ENCODE measurements at regions of chr5 and their contacts with region 1.

Region 1: GRCh38 chr5:88690409-88691229 is 192.4 kb downstream of the MEF2C start:
- DNase-seq: peak; percentile 75
- ATAC-seq: peak; percentile 79
- H3K4me3 Mint-ChIP-seq: peak overlapping the region; percentile 53
- H3K27ac Mint-ChIP-seq: peak overlapping the region; percentile 80
- H3K4me1 Mint-ChIP-seq: peaks cover 10% of the 10 kb centered on the region
- H3K27me3 Mint-ChIP-seq: peaks cover 88% of the 10 kb centered on the region

Region 2: GRCh38 chr5:88391116-88391515 is 299.5 kb before region 1 on chr5:
- CTCF ChIA-PET with region 1: no interaction called
- POLR2A ChIA-PET with region 1: no interaction called
- DNase-seq: no peak
- ATAC-seq: no peak
- H3K4me3 Mint-ChIP-seq: no peak overlapping the region
- H3K27ac Mint-ChIP-seq: no peak overlapping the region
- H3K4me1 Mint-ChIP-seq: no peaks in the 10 kb centered on the region
- H3K27me3 Mint-ChIP-seq: no peaks in the 10 kb centered on the region

Region 3: DNA sequence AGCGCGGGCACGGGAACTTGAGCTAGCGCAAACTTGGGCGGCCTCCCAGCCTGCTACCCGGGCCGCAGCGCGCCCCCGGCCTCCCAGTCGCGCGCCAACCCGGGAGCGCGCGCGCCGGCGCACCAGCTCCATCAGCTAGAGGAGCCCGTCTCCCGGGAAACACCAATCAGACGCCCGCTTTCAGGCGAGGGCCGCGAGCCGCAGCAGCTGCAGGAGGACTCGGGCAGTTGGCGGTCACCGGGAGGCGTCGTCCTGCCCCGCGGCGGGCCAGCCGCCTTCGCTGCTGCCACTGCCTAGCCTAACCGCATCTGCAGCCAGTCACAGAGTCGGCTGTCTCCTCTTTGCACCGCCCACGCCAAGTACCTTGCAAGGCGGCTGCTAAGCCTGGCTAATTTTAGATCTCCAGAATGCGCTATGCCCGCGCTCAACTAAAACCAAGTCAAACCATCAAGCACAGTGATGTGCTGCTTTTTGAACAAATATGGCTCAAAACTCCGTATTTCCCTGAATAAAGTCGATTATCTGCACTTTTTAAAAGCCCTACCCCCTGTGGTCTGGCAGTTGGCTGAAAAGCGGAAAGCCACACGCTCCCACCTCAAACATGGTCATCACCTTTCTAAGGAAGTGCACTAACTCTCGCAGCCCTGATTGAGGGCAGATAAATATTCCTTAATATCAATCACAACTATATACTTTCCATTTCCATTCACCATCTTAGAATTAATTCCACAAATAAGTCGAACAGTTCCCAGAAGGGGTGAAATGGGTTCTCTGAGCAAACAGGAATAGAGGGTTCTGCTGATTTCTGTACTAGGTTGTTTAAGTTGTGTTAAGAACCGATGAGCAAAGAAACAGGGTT is 29.4 kb before region 1 on chr5:
- CTCF ChIA-PET with region 1: interaction called, 27 read pairs
- POLR2A ChIA-PET with region 1: no interaction called
- DNase-seq: peak; percentile 45
- ATAC-seq: peak; percentile 76
- H3K4me3 Mint-ChIP-seq: peak overlapping the region; percentile 70
- H3K27ac Mint-ChIP-seq: no peak overlapping the region
- H3K4me1 Mint-ChIP-seq: peaks cover 24% of the 10 kb centered on the region
- H3K27me3 Mint-ChIP-seq: peaks cover 64% of the 10 kb centered on the region

Region 4: DNA sequence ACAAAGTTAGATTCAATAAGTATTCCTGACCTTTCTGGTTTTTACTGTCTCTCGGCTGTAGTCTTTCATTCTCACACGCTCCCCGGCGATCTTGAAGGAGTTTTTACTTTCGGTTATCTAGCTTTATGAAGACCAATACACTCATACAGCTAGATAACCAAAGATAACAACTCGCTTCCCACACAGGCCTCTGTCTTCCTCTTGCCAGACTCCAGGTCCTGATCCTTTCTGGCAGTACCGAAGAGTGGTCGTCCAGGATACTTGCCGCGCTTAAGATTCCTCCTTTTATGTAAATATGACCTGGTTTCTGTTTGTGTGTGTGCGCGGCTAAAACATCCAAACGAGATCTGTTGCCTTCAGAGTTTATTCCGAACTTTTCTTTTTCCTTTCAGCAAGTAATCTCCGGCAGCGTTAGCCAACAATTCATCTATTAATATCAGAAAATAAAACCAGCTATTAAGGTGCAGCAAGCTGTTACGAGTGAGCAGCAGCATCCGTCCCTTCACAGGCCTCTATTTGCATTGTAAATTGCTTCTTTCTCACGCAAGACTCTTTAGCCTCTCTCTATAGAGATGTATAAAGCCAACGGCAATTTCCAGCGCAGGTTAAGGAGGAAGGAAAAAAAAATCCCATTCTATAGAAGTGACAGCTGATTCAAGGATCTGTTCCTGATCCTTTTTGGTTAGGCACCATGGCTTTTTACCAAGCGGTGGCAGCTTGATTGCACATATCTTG is 23.7 kb before region 1 on chr5:
- CTCF ChIA-PET with region 1: interaction called, 25 read pairs
- POLR2A ChIA-PET with region 1: no interaction called
- DNase-seq: no peak
- ATAC-seq: peak; percentile 63
- H3K4me3 Mint-ChIP-seq: peak overlapping the region; percentile 79
- H3K27ac Mint-ChIP-seq: no peak overlapping the region
- H3K4me1 Mint-ChIP-seq: peaks cover 30% of the 10 kb centered on the region
- H3K27me3 Mint-ChIP-seq: peaks cover 80% of the 10 kb centered on the region

Region 5: GRCh38 chr5:88680253-88681132 is 10.1 kb before region 1 on chr5:
- CTCF ChIA-PET with region 1: interaction called, 16 read pairs
- POLR2A ChIA-PET with region 1: interaction called, 3 read pairs
- DNase-seq: peak; percentile 83
- ATAC-seq: peak; percentile 95
- H3K4me3 Mint-ChIP-seq: peak overlapping the region; percentile 31
- H3K27ac Mint-ChIP-seq: no peak overlapping the region
- H3K4me1 Mint-ChIP-seq: peaks cover 24% of the 10 kb centered on the region
- H3K27me3 Mint-ChIP-seq: peaks cover 71% of the 10 kb centered on the region